ENCODE measurements at regions of chr14 and their contacts with region 1.

Region 1: DNA sequence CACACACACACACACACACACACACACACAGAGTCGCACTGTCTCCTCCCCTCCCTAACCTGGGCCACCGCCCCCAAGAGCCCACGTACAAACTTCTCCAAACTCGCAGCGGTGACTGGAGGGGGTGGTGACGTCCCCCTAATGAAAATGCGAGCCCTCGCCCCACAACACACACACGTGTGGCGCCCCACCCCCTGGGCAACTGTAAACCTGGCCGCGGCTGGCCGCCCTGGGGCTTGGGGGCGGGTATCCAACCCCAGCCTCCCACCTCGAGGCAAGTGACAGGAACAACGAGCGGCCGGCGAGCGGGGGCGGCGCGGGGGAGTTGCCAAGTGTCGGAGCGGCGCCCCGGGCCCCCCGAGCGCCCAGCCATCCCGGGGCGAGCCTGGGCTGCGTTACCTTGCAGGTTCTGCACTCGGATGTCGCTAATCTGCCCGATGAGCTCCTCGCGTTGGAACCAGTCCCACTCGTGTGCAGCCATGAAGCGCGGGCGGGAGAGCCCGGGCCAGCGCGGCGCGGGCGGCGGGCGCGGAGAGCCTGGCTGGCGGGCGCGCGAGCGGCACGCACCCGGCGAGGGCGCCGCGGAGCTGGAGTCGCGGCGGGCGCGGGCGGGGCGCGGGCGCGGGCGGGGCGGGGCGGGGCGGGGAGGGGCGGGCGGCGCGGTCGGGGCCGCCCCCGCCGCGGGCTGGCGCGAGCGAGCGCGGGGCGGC is at the start of gene CLMN:
- DNase-seq: no peak
- ATAC-seq: peak; percentile 54
- H3K4me3 ChIP-seq: peak within 1 kb of the TSS; percentile 94
- H3K27ac ChIP-seq: 0 out of 2 replicates have a peak within 1 kb of the TSS, but pooled peaks have one; percentile 16
- H3K4me1 ChIP-seq: peaks cover 18% of the 10 kb centered on the region
- H3K27me3 ChIP-seq: no peaks in the 10 kb centered on the region
- CTCF ChIP-seq: no peak
- EP300 ChIP-seq: no peak
- POLR2A ChIP-seq: peak; percentile 56; the same call in 1 of the 2 replicates
- RAD21 ChIP-seq: 0 out of 2 replicates have a peak, but pooled peaks have one; percentile 1
- polyA plus RNA-seq, gene CLMN: 7.8 to 13.1 TPM

Region 2: DNA sequence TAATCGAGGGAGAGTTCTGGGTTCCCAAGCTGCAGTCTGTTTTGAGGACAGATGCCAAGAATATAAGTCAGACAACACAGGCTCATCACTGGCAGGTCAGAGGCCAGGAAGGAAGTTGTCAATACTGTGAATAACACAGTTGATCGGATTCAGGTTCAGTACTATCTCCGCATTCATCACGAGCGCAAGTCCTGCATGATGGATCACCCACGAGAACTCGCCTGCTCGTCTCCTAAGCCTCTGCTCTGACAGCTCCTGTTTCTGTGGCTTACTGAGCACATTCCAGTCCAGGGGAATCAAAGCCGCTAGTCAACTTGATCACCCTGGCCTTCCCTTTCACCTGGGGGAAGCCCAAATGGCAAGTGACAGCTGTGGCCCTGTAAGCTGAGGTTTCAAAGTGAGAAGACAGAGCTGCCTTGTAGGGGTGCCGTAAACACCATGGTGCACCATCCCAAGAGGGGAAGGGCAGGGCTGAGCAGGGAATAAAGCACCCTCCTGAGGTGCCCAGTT is 102.0 kb before region 1 on chr14:
- CTCF ChIA-PET with region 1: interaction called, 4 read pairs
- POLR2A ChIA-PET with region 1: no interaction called
- RAD21 ChIA-PET with region 1: interaction called, 3 read pairs
- SMC1A ChIA-PET with region 1: interaction called, 5 read pairs
- in situ Hi-C with region 1: no loop called
- intact Hi-C with region 1: loop called (anchors 5 kb)
- DNase-seq: no peak
- ATAC-seq: no peak
- H3K4me3 ChIP-seq: no peak overlapping the region
- H3K27ac ChIP-seq: no peak overlapping the region
- H3K4me1 ChIP-seq: peaks cover 18% of the 10 kb centered on the region
- H3K27me3 ChIP-seq: no peaks in the 10 kb centered on the region
- CTCF ChIP-seq: no peak
- EP300 ChIP-seq: no peak
- POLR2A ChIP-seq: no peak
- RAD21 ChIP-seq: no peak